ENCODE measurements at regions of chr2 and their contacts with region 1.

Region 1: DNA sequence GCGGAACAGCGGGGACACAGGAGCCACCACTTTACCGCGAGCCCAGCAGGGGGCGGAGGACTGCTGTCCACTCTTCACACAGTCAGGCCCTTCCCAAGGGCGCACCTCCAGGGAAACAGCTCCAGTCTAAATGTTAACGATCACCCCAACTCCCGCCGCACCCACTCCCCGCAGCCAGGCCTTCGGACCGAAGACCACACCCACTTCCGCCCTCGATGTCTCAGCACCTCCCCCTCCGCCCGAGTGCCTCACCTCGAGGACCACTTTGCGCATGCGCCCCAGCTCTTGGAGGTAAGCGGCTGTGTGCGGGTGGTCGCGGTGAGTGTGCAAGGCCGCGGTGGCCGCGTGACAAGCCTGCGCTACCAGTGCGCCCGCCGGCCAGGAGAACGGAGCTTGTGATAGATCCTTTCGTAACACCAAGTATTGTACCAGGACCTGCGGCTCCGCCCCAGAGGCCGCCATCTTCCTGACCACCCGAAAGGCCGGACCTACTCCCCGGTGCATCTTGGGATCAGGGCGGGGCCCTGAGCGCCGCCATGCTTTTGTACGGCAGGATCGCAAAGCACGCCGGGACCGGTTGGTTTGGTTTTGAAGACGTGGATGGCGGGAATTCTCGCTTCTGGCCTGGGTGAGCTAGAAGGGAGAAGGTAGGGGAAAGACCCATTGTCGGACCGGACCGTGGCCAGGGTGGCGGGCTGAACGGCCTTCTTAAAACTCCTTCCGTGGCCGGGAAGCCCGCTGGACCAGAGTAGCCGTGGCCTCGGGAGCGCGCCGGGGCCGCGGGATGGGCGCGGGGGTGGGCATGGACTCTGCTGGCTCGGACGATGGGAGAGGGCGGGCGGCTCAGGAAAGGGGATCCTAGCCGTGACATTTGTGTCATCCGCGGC is at the starts of genes CENPO and PTRHD1:
- DNase-seq: peak; percentile 98 to 99
- H3K4me3 ChIP-seq: peak within 1 kb of the TSS; percentile 78
- H3K4me3 Mint-ChIP-seq: peak within 1 kb of the TSS; percentile 95
- H3K27ac Mint-ChIP-seq: peak within 1 kb of the TSS; percentile 99
- H3K4me1 ChIP-seq: peaks cover 24% of the 10 kb centered on the region
- H3K4me1 Mint-ChIP-seq: peaks cover 27% of the 10 kb centered on the region
- H3K27me3 ChIP-seq: no peaks in the 10 kb centered on the region
- H3K27me3 Mint-ChIP-seq: no peaks in the 10 kb centered on the region
- CTCF ChIP-seq: peak; percentile 82 to 92
- total RNA-seq, gene CENPO: 54.8 and 58.3 TPM in 2 replicates
- total RNA-seq, gene PTRHD1: 49.4 and 52.8 TPM in 2 replicates

Region 2: DNA sequence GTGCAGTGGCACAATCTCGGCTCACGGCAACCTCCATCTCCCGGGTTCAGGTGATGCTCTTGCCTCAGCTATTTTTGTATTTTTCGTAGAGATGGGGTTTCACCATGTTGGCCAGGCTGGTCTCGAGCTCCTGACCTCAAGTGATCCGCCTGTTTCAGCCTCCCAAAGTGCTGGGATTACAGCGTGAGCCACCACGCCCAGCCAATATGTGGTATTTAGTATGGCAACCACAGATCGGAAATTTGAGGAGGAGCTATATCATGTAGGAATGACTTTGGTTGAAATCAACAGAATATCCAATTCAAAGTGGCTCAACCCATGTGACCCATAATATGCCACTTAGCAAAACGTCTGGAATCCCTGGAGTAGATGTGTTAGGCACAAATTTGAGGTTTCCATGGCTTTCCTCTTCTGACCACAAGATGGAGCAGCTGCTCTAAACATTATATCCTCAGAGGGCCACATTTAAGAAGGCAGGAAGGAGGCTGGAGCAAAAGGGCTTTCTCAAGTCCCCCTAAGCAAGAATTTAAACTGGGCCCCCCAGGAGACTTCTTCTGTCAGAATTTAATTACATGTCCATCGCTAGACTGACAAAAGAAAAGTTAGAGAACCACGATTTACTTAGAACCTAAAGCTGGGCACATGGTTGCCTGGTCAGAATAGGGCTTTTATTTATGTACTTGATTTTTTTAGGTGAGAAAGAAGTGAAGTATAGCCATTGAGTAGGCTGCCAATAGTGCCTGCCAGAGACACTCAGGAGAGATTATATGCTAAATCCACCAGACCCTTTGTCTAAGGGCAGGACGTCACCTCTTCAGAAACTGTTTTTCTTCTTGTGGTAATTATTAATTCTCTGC is 383.2 kb before region 1 on chr2:
- CTCF ChIA-PET with region 1: no interaction called
- POLR2A ChIA-PET with region 1: no interaction called
- intact Hi-C with region 1: loop called (anchors 1 kb)
- DNase-seq: peak; percentile 49 to 66
- H3K4me3 ChIP-seq: no peak overlapping the region
- H3K4me3 Mint-ChIP-seq: no peak overlapping the region
- H3K27ac Mint-ChIP-seq: no peak overlapping the region
- H3K4me1 ChIP-seq: no peaks in the 10 kb centered on the region
- H3K4me1 Mint-ChIP-seq: no peaks in the 10 kb centered on the region
- H3K27me3 ChIP-seq: no peaks in the 10 kb centered on the region
- H3K27me3 Mint-ChIP-seq: no peaks in the 10 kb centered on the region
- CTCF ChIP-seq: peak; percentile 80 to 90

Region 3: DNA sequence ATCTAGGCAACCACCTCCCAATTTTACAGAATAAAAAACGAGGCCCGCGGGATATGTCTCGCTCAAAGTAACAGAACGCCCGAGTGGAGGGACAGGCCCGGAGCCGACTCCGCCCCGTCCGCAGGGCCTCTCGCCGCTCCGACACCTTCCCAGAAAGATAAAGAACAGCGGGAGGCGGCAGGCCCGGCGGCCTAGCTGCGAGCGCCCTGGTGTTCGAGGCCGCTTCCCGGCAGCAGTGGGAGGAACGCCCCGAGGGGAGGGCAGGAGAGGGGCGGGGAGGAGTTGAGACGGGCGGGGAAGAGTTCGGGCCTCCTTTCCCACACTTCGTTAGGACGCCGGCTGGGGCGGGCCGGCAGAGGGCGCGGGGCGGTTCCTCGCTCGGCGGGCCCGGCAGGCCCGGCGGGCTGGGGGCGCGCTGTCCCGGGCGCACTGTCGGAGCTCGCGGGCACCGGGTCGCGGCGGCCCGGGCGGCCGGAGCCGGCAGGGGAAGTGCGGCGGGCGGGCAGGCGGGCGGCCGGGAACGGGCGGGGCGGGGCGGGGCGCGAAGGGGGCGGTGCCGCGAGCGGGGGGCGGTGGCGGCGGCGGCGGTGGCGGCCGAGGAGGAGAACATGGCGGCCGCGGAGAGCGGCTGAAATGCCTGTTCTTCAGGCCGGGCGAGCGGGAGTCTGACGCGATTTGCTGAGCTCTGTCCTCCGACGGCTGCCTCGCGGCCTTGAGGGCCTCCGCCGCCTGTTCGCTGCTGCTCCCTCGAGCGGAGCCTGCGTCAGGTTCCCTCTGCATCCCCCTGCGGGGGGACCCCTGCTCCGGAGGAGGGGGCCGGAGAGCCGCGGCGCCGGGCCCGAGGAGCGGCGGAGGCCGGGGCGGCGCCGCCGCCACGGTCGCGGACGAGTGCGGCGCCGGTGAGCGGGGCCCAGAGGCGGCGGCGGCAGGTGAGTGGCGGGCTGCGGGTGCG is 302.2 kb before region 1 on chr2 and contains the start of gene NCOA1:
- CTCF ChIA-PET with region 1: interaction called, 6 read pairs
- POLR2A ChIA-PET with region 1: interaction called, 3 read pairs
- intact Hi-C with region 1: loop called (anchors 2 kb)
- DNase-seq: peak; percentile 93
- H3K4me3 ChIP-seq: peak within 1 kb of the TSS; percentile 96
- H3K4me3 Mint-ChIP-seq: peak within 1 kb of the TSS; percentile 74
- H3K27ac Mint-ChIP-seq: peak within 1 kb of the TSS; percentile 69
- H3K4me1 ChIP-seq: peaks cover 43% of the 10 kb centered on the region
- H3K4me1 Mint-ChIP-seq: peaks cover 53% of the 10 kb centered on the region
- H3K27me3 ChIP-seq: no peaks in the 10 kb centered on the region
- H3K27me3 Mint-ChIP-seq: no peaks in the 10 kb centered on the region
- CTCF ChIP-seq: peak; percentile 18 to 50
- total RNA-seq, gene NCOA1: 34.7 and 37.1 TPM in 2 replicates

Region 4: DNA sequence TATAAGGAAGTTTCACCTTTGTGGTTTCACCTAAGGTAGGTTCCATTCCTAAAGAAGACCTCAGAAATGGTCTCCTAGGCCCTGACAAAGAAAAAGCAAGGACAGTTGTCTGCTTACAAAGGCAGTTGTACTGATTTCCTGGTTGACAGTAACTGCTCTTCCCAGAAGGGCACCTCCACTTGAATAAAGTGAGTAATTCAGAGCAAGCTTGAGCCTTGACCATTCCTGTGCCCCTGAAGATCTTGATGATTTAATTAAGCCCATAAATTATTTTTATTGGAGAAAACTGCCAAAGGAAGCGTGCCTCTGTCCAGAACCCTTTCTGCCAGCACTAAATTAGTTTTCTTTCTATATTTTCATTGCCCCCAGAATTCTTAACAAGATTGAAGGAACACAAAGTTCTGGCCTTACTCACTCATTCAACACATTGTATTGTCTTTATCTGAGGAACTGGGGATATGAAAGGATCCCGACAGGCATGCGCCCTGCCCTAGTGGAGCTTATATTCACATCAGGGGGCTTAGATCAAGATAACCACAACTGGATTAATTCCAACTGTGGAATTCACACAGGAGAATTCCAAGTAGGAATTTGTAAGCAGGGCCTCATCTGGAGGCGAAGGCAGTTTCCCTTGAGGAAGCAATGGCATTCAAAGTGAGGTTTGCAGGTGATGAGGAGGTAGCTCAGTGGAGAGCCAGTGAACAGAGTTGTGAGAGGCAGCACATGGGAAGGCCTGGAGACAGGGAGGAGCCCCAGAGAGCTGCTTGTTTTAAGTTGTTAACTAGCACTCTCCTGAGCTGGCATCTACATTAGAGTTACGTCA is 21.1 kb before region 1 on chr2:
- CTCF ChIA-PET with region 1: interaction called, 6 read pairs
- POLR2A ChIA-PET with region 1: interaction called, 3 read pairs
- intact Hi-C with region 1: loop called (anchors 2 kb)
- DNase-seq: no peak
- H3K4me3 ChIP-seq: no peak overlapping the region
- H3K4me3 Mint-ChIP-seq: no peak overlapping the region
- H3K27ac Mint-ChIP-seq: peak overlapping the region; percentile 83
- H3K4me1 ChIP-seq: peaks cover 35% of the 10 kb centered on the region
- H3K4me1 Mint-ChIP-seq: peaks cover 40% of the 10 kb centered on the region
- H3K27me3 ChIP-seq: no peaks in the 10 kb centered on the region
- H3K27me3 Mint-ChIP-seq: no peaks in the 10 kb centered on the region
- CTCF ChIP-seq: no peak

Region 5: GRCh38 chr2:24806662-24807037 is 13.5 kb after region 1 on chr2:
- CTCF ChIA-PET with region 1: interaction called, 5 read pairs
- POLR2A ChIA-PET with region 1: interaction called, 6 read pairs
- intact Hi-C with region 1: loop called (anchors 2 kb)
- DNase-seq: no peak
- H3K4me3 ChIP-seq: no peak overlapping the region
- H3K4me3 Mint-ChIP-seq: no peak overlapping the region
- H3K27ac Mint-ChIP-seq: peak overlapping the region; percentile 24
- H3K4me1 ChIP-seq: peaks cover 15% of the 10 kb centered on the region
- H3K4me1 Mint-ChIP-seq: peaks cover 11% of the 10 kb centered on the region
- H3K27me3 ChIP-seq: no peaks in the 10 kb centered on the region
- H3K27me3 Mint-ChIP-seq: no peaks in the 10 kb centered on the region
- CTCF ChIP-seq: no peak

Region 6: DNA sequence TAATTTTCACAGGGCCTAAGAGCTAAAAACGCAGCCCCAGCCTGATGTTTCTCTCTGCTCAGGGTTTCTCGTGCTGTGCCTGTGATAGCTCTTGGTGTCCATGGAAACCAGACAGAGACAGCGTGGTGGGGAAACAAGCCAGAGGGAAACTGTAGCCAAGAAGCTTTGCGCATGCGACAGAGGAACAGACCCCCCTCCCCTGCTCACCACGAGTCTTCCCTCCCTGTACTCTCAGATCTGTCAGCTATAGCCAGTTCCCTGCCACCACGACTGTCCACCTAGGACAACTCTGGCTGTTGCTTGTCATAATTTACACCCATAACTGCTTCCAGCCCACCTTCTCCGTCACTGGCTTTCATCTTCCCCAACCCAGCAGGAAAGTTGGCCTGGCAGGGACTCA is 191.8 kb after region 1 on chr2:
- CTCF ChIA-PET with region 1: no interaction called
- POLR2A ChIA-PET with region 1: no interaction called
- intact Hi-C with region 1: no loop called
- DNase-seq: no peak
- H3K4me3 ChIP-seq: no peak overlapping the region
- H3K4me3 Mint-ChIP-seq: no peak overlapping the region
- H3K27ac Mint-ChIP-seq: no peak overlapping the region
- H3K4me1 ChIP-seq: no peaks in the 10 kb centered on the region
- H3K4me1 Mint-ChIP-seq: no peaks in the 10 kb centered on the region
- H3K27me3 ChIP-seq: no peaks in the 10 kb centered on the region
- H3K27me3 Mint-ChIP-seq: no peaks in the 10 kb centered on the region
- CTCF ChIP-seq: no peak

Measured in Caco-2 (cell line).